ENCODE measurements at regions of chr17 and their contacts with region 1.

Region 1: GRCh38 chr17:31967648-31968047 is 30.8 kb downstream of the SUZ12 start:
- DNase-seq: no peak
- ATAC-seq: no peak; the same call in 1 of the 2 replicates
- H3K4me3 ChIP-seq: no peak overlapping the region
- H3K27ac ChIP-seq: no peak overlapping the region
- H3K4me1 ChIP-seq: no peaks in the 10 kb centered on the region
- H3K27me3 ChIP-seq: no peaks in the 10 kb centered on the region
- CTCF ChIP-seq: no peak

Region 2: DNA sequence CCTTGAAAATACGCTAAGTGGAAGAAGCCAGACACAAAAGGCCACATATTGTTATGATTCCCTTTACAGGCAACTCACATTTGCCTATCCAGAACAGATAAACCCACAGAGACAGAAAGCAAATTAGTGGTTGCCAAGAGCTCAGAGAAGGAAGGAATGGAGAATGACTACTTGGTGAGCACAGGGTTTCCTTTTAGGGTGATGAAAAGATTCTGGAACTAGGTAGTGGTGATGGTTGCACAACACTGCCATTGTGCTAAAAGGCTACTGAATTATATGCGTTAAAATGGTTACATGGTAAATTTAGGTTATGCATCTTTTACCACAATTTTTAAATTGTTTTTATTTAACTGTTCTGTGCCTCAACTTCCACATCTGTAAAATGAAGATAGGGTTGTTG is 113.0 kb before region 1 on chr17:
- CTCF ChIA-PET with region 1: no interaction called
- POLR2A ChIA-PET with region 1: no interaction called
- intact Hi-C with region 1: no loop called
- DNase-seq: no peak
- ATAC-seq: no peak
- H3K4me3 ChIP-seq: no peak overlapping the region
- H3K27ac ChIP-seq: no peak overlapping the region
- H3K4me1 ChIP-seq: peaks cover 11% of the 10 kb centered on the region
- H3K27me3 ChIP-seq: no peaks in the 10 kb centered on the region
- CTCF ChIP-seq: no peak

Region 3: DNA sequence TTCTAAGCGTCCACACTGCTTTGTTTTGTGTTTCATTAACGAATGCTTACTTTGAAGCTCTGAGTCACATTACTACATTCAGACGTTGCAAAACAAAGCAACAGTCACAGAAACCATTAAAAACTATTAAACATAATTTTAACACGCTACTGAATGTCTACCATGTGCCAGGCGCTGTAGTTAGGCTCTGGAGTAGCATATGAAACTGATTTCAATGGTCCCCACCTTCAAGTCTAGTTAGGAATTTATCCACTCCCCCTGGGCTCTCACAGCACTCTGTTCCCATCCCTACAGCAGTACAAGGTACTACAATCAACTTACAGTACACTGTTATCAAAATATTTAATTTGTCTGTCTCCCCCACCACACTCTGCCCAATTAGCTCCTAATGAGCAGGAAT is 66.8 kb before region 1 on chr17:
- CTCF ChIA-PET with region 1: no interaction called
- POLR2A ChIA-PET with region 1: interaction called, 18 read pairs
- intact Hi-C with region 1: no loop called
- DNase-seq: peak; percentile 13
- ATAC-seq: peak; percentile 25
- H3K4me3 ChIP-seq: peak overlapping the region; percentile 97
- H3K27ac ChIP-seq: peak overlapping the region; percentile 47
- H3K4me1 ChIP-seq: no peaks in the 10 kb centered on the region
- H3K27me3 ChIP-seq: no peaks in the 10 kb centered on the region
- CTCF ChIP-seq: no peak

Measured in PC-3 (cell line).